Activated T-helper 1 cell treated with anti-CD3 and anti-CD28 coated beads, Interleukin-12 subunit alpha, Interleukin-12 subunit beta, Interleukin-2, Interleukin-4 antibody, amounts not matched to agents 30 ng/mL and 10 ng/mL and 1 ng/mL, durations not matched to agents 14 hours and 24 hours and 36 hours (primary cell): ENCODE measurements at regions of chr4 and their contacts with region 1.

Region 1: DNA sequence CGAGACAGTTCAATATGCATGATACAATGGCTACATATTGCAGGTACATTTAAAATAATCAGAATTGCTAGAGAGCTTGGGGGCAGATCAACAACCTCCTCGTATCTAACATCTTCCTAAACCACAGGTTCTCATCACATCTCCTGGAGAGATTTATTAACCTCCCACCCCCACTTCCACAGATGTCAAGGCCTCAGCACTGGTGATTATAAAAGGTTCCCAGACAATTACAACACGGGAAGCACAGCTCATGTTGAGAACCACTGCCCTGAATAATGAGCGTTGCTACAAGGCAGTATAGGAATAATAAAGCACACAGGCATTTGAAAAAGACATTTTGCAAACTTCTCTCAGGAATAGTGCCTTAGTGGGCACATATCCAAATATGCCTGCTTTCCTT is 42.8 kb downstream of the ELOVL6 start:
- DNase-seq: no peak
- H3K4me3 Mint-ChIP-seq: no peak overlapping the region
- H3K27ac Mint-ChIP-seq: no peak overlapping the region
- H3K4me1 Mint-ChIP-seq: peaks cover 13% of the 10 kb centered on the region
- H3K27me3 Mint-ChIP-seq: no peaks in the 10 kb centered on the region

Region 2: DNA sequence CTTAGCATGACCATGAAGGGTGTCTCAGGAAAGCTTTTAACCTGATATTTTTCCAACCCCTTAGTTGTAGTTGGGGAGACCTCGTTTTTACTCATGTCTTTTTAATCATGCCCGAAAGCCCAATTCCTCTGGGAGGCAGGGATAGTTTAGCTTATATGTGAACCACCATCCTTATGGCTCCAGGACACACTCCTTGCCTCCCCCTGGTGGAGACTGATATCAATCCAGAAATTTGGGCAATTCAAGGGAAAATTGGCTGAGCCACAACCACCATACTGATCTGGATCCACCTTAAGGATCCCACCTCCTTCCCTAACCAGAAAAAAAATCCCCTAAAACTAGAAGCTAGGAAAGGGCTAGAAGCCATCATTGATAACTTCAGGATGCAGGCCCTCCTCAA is 839.8 kb before region 1 on chr4:
- intact Hi-C with region 1: no loop called
- DNase-seq: no peak
- H3K4me3 Mint-ChIP-seq: no peak overlapping the region
- H3K27ac Mint-ChIP-seq: no peak overlapping the region
- H3K4me1 Mint-ChIP-seq: no peaks in the 10 kb centered on the region
- H3K27me3 Mint-ChIP-seq: peaks cover 4% of the 10 kb centered on the region

Region 3: DNA sequence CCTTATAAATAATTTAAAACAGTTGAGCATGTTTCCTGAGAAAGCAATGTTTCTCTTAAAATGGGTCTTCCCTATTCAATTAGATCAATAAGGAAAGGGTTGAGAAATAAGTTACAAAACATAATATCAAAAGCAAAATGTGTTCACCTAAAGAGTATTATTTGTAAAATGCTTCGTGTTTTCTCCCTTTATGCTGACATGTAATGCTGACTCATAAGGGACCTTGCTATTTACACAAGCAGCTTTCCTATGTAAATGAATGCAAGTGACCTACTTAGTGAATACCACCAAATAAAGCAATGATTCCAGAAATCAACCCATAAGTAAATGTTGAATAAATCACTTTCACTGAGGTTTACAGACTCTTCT is 48.7 kb before region 1 on chr4:
- intact Hi-C with region 1: loop called (anchors 2 kb)
- DNase-seq: no peak
- H3K4me3 Mint-ChIP-seq: no peak overlapping the region
- H3K27ac Mint-ChIP-seq: no peak overlapping the region
- H3K4me1 Mint-ChIP-seq: peaks cover 18% of the 10 kb centered on the region
- H3K27me3 Mint-ChIP-seq: no peaks in the 10 kb centered on the region